ENCODE measurements at regions of chr1 and their contacts with region 1.

Region 1: DNA sequence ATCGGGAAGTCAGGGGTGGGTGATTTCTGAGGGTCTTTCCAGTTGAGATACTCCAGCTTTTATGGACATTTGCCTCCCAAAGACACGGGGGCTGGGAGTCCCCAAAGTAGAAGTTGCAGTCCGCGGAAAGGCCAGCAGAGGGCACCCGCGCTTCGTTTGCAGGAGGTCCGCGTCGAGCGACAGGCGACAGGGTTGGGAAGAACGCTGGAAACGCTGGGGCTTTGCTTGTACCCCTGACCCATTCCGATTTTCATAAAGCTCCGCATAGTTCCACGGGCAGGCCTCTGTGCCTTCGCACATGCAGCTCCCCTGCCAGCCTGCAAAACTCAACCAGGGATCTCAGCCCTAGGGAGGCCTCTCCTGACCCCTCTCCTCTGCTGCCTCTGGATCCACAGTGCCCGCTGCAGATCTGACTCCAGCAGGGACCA is 44.2 kb upstream of the LAPTM5 start:
- DNase-seq: peak; percentile 86 to 95
- ATAC-seq: peak; percentile 83
- H3K4me3 ChIP-seq: no peak overlapping the region
- H3K27ac ChIP-seq: no peak overlapping the region
- H3K4me1 ChIP-seq: no peaks in the 10 kb centered on the region
- H3K27me3 ChIP-seq: no peaks in the 10 kb centered on the region

Region 2: DNA sequence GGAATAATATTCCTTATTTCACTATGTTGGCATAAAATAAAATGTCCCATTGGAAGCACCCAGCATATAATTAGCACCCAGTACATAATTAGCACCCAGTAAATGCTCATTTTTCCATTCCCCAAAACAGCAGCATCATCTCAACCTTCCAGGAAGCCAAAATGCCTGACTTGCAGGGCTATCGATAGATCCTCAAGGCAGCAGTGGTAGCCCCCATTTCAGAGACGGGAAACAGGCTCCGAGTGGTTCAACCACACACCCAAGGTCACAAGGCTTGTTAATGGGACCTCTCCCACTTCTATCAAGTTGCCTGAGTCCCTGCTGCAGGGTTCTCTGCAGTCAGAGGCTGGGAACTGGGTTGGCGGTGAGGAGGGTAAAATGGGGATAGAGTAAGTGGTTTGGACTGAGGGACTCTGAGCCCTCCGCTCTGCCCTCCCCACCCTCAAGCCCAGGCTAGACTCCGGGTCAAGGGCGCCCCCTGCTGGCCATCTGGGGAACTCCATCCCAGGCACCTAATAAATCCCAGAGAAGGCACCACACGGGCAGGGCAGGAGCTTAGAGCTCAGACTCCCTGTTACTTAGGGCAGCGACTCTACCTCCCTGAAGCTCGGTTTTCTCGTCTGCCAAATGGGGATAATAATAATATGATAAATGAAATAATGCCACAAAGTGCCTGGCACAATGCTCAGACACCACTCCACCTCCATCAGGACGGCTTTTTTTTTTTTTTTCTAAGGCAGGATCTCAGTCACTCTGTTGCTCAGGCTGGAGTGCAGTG is 22.3 kb before region 1 on chr1:
- intact Hi-C with region 1: loop called in 1 of 2 experiments (anchors 1 kb)
- DNase-seq: peak; percentile 88 to 97
- ATAC-seq: peak; percentile 80
- H3K4me3 ChIP-seq: no peak overlapping the region
- H3K27ac ChIP-seq: no peak overlapping the region
- H3K4me1 ChIP-seq: no peaks in the 10 kb centered on the region
- H3K27me3 ChIP-seq: no peaks in the 10 kb centered on the region

Region 3: GRCh38 chr1:30868833-30869435 is 67.1 kb after region 1 on chr1:
- intact Hi-C with region 1: no loop called
- DNase-seq: no peak
- ATAC-seq: no peak
- H3K4me3 ChIP-seq: no peak overlapping the region
- H3K27ac ChIP-seq: no peak overlapping the region
- H3K4me1 ChIP-seq: no peaks in the 10 kb centered on the region
- H3K27me3 ChIP-seq: no peaks in the 10 kb centered on the region